Naive thymus-derived CD4-positive, alpha-beta T cell (primary cell): ENCODE measurements at regions of chr2 and their contacts with region 1.

Region 1: GRCh38 chr2:230472621-230473018 is 56.6 kb downstream of the SP100 start:
- DNase-seq: peak in 1 of 9 donors; percentile 39
- ATAC-seq: peak; percentile 74
- H3K4me3 ChIP-seq: no peak overlapping the region
- H3K4me3 Mint-ChIP-seq: peak overlapping the region in 8 of 10 donors; percentile 12 to 62 (median 30)
- H3K27ac ChIP-seq: peak overlapping the region; percentile 48
- H3K27ac Mint-ChIP-seq: peak overlapping the region; percentile 45 to 92 (median 83)
- H3K4me1 ChIP-seq: peaks cover 10 to 24% of the 10 kb centered on the region in 2 donors
- H3K4me1 Mint-ChIP-seq: peaks cover 22 to 60% (median 52%) of the 10 kb centered on the region in 7 donors
- H3K27me3 ChIP-seq: no peaks in the 10 kb centered on the region
- H3K27me3 Mint-ChIP-seq: no peaks in the 10 kb centered on the region

Region 2: GRCh38 chr2:230457073-230457768 is 15.4 kb before region 1 on chr2:
- CTCF ChIA-PET with region 1: no interaction called
- POLR2A ChIA-PET with region 1: no interaction called
- intact Hi-C with region 1: loop called in 1 of 2 experiments (anchors 2 kb)
- DNase-seq: no peak
- ATAC-seq: peak; percentile 80
- H3K4me3 ChIP-seq: no peak overlapping the region
- H3K4me3 Mint-ChIP-seq: peak overlapping the region in 9 of 10 donors; percentile 10 to 68 (median 48)
- H3K27ac ChIP-seq: peak overlapping the region; percentile 6
- H3K27ac Mint-ChIP-seq: peak overlapping the region; percentile 15 to 86 (median 69)
- H3K4me1 ChIP-seq: peaks cover 11 to 14% of the 10 kb centered on the region in 2 donors
- H3K4me1 Mint-ChIP-seq: peaks cover 37 to 84% (median 74%) of the 10 kb centered on the region in 7 donors
- H3K27me3 ChIP-seq: no peaks in the 10 kb centered on the region
- H3K27me3 Mint-ChIP-seq: no peaks in the 10 kb centered on the region